ENCODE measurements at regions of chr7 and their contacts with region 1.

Region 1: GRCh38 chr7:152675759-152676636 is at the start of gene XRCC2:
- DNase-seq: peak; percentile 94
- H3K4me3 ChIP-seq: peak within 1 kb of the TSS; percentile 47 to 79 (median 60)
- H3K27ac ChIP-seq: peak within 1 kb of the TSS; percentile 76 to 87 (median 82)
- H3K4me1 ChIP-seq: peaks cover 0 to 12% (median 10%) of the 10 kb centered on the region in 4 donors
- H3K27me3 ChIP-seq: no peaks in the 10 kb centered on the region
- CTCF ChIP-seq: no peak
- EP300 ChIP-seq: peak in 1 of 4 donors; percentile 33
- POLR2A ChIP-seq: peak; percentile 57 to 63
- total RNA-seq, gene XRCC2: 0.27 to 0.55 (median 0.34) TPM

Region 2: GRCh38 chr7:152313831-152314604 is 362.0 kb before region 1 on chr7:
- intact Hi-C with region 1: loop called (anchors 10 kb)
- DNase-seq: no peak
- H3K4me3 ChIP-seq: no peak overlapping the region
- H3K27ac ChIP-seq: peak overlapping the region in 2 of 4 donors; percentile 13 to 18
- H3K4me1 ChIP-seq: peaks cover 0 to 47% (median 26%) of the 10 kb centered on the region in 4 donors
- H3K27me3 ChIP-seq: no peaks in the 10 kb centered on the region
- CTCF ChIP-seq: no peak
- EP300 ChIP-seq: no peak
- POLR2A ChIP-seq: no peak

Region 3: DNA sequence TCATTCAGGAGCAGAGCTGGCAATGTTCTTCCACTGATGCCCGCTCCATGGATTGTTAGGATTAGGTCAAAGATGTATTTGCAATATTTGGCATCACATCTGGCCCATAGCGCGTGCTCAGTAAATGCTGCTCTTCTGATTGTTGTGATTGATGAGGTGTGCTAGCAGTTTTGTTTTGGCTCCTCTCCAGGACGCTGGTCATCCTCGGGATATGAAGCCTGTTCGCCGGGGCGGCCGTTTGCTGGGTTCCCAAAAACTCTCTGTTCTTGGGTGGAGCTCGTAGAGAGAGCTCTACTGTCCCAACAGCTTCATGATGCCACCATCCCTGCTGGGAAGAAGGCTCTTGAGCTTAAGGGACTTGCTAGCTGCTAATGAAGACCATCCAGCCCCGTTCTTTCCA is 96.9 kb before region 1 on chr7:
- intact Hi-C with region 1: no loop called
- DNase-seq: no peak
- H3K4me3 ChIP-seq: no peak overlapping the region
- H3K27ac ChIP-seq: no peak overlapping the region
- H3K4me1 ChIP-seq: no peaks in the 10 kb centered on the region
- H3K27me3 ChIP-seq: no peaks in the 10 kb centered on the region
- CTCF ChIP-seq: no peak
- EP300 ChIP-seq: no peak
- POLR2A ChIP-seq: no peak

Region 4: DNA sequence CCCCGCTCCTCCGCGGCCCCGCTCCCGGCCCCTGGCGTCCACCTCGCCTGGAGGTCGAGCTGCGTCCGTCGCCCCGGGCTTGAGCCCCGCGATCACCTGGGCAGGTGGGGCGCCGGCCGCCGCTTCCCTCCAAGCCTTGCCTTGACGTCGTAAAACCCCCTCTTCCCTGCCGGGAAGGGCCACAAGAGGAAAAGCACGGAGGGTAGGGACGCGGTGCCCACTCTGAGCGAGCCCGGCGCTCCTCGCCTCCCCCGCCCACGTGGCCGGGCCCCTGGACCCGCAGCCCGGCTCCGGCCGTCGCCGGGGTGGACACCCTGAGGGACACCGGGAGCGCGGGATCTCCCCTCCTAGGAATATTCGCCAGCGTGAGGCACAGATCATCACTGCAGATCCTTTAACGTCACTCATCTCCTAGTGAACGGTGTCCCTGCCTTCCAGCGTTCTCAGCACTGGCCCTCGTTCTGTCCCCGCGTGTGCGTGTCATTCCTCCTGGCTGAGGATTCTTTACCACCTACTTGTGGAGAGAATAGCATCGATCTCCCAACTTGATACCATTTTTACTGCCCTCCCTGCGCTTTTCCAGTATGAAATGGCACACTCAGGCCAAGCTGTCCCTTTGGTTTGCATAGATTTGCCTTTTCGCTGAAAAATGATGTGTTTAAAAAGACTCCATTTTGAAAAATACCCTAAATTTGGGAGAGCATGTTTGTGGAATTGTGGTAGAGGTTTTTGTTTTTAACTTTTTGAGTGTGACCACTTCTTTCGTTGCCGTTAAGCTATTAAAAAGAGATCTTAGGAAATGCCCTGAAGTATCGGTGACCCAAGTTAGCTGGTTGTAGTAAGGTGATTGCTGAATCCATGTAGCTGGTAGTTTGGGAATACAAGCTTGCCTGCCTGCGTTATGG is 84.2 kb after region 1 on chr7:
- intact Hi-C with region 1: loop called (anchors 5 kb)
- DNase-seq: peak; percentile 66
- H3K4me3 ChIP-seq: peak overlapping the region; percentile 90 to 98 (median 94)
- H3K27ac ChIP-seq: peak overlapping the region; percentile 88 to 96 (median 94)
- H3K4me1 ChIP-seq: peaks cover 0 to 16% (median 13%) of the 10 kb centered on the region in 4 donors
- H3K27me3 ChIP-seq: no peaks in the 10 kb centered on the region
- CTCF ChIP-seq: no peak
- EP300 ChIP-seq: no peak
- POLR2A ChIP-seq: no peak

Measured in sigmoid colon (tissue), 7 donors.